B cell (primary cell): ENCODE measurements at regions of chr2 and their contacts with region 1.

Region 1: DNA sequence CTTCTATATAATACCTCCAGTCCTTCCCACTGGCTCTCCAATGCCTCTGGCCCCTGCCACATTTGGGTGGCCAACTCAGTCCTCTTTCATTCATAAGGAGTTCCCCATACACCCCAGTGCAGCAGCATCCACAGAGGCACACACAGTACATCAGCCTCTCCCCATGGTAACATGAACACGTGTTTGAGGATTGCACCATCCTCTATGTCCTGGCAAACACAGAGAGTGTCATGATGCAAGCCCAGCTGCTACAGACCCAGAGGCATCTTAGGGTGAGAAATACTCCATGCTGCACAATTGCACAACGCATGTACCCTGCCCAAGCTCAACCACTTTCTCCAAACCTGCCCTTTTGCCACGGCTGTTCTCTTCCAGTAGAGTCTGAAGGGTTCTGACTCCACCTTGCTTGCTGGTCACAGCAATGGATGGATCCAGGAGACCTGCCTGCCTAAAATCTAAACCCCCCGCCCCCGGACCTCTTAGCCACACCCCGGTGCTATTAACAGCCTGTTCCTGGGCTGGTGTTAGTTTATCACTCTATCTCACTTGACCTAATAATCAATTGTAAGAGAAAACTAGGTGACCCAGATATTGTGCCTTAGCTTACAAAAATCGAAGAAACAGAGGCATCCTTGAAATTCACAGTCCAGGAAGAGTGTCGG is 11.4 kb downstream of the IGFBP5 start:
- DNase-seq: no peak
- ATAC-seq: no peak
- H3K4me3 ChIP-seq: no peak overlapping the region
- H3K4me3 Mint-ChIP-seq: no peak overlapping the region
- H3K27ac ChIP-seq: no peak overlapping the region
- H3K27ac Mint-ChIP-seq: no peak overlapping the region
- H3K4me1 ChIP-seq: no peaks in the 10 kb centered on the region
- H3K4me1 Mint-ChIP-seq: no peaks in the 10 kb centered on the region
- H3K27me3 ChIP-seq: peaks cover 0 to 27% (median 6%) of the 10 kb centered on the region in 4 experiments
- H3K27me3 Mint-ChIP-seq: peaks cover 64% of the 10 kb centered on the region
- CTCF ChIP-seq: no peak

Region 2: DNA sequence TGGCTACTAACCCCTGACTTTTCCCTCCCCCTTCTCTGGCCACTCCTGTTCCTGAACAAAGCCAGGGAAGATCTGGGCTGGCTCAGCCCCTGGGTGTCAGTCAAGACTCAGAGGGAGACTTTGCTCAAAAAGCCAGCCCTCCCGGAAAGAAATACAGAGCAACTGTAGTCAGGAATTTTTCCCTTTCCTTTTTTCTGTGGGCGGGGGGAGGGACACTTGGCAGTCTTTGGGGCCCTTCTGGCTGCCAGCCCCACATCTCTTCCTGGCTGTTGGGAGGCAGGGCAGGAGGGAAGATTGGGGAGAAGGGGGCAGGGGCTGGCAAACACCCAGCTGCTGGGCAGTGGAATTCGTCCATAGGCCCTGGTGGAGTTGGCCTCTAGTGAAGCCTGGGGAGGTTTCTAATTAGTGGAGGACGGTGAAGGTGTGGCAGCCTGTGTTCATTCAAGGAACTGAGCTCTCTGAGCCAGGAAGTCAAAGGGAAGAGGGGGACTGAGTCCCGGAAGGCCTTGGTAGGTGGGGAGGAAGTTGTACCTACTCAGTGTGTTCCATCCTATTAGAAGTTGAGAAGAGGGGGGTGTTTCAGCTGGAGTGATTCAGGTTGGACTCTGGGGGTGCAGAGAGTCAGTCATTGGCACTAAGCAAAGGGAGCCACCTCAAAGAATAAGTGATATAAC is 39.9 kb before region 1 on chr2:
- CTCF ChIA-PET with region 1: no interaction called
- POLR2A ChIA-PET with region 1: no interaction called
- intact Hi-C with region 1: no loop called
- DNase-seq: no peak
- ATAC-seq: no peak
- H3K4me3 ChIP-seq: no peak overlapping the region
- H3K4me3 Mint-ChIP-seq: no peak overlapping the region
- H3K27ac ChIP-seq: no peak overlapping the region
- H3K27ac Mint-ChIP-seq: no peak overlapping the region
- H3K4me1 ChIP-seq: peaks cover 0 to 3% of the 10 kb centered on the region in 2 donors
- H3K4me1 Mint-ChIP-seq: peaks cover 5% of the 10 kb centered on the region
- H3K27me3 ChIP-seq: peaks cover 0 to 3% (median under 1%) of the 10 kb centered on the region in 4 experiments
- H3K27me3 Mint-ChIP-seq: peaks cover 24% of the 10 kb centered on the region
- CTCF ChIP-seq: no peak

Region 3: GRCh38 chr2:217510771-217511291 is 826.9 kb after region 1 on chr2:
- CTCF ChIA-PET with region 1: interaction called, 12 read pairs
- POLR2A ChIA-PET with region 1: no interaction called
- intact Hi-C with region 1: no loop called
- DNase-seq: peak; percentile 26
- ATAC-seq: no peak
- H3K4me3 ChIP-seq: no peak overlapping the region
- H3K4me3 Mint-ChIP-seq: no peak overlapping the region
- H3K27ac ChIP-seq: no peak overlapping the region
- H3K27ac Mint-ChIP-seq: no peak overlapping the region
- H3K4me1 ChIP-seq: no peaks in the 10 kb centered on the region
- H3K4me1 Mint-ChIP-seq: no peaks in the 10 kb centered on the region
- H3K27me3 ChIP-seq: peaks cover 0 to 8% (median 4%) of the 10 kb centered on the region in 4 experiments
- H3K27me3 Mint-ChIP-seq: peaks cover 25% of the 10 kb centered on the region
- CTCF ChIP-seq: peak; percentile 44

Region 4: DNA sequence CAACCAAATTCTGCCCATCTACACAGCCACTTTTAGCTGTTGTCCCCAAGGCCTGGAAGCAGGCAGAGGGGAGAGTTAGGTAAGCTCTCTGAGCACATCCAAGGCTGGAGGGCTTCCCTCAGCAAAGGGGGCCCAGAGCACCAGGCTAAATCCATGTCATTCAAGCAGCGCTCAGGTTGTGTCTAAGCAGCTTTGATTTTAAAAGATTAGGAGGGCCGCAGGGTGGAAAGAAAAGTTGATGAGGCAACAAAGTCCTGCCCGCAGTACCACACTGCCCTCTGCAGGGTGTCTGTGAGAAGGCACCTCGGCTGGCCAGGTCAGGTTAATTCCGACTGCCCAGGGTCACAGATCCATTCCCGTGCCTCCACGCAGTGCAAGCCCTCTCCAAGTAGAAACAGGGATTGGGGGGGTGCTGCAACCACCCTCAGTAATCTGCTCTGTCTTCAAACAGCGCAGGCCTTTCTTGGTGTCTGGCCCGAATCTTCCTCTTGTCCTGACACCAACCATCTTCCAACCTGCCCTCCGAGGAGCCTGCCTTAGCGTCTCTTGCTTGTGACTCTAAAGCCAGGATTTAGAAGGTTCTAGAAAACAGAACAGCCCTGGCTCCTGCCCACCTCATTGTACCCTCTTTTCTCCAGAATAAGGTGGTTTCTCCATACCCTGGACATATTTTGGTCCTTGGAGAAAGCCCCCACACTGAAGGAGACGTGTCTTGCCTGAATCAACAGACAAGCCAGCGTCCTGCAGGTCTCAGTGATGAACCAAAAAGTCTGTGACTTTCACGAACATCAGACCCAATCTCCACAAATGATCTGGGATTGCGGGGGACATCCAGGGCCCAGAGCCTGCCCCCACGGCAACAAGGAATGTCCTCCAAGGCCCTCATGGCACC is 1029.7 kb after region 1 on chr2:
- CTCF ChIA-PET with region 1: interaction called, 21 read pairs
- POLR2A ChIA-PET with region 1: no interaction called
- intact Hi-C with region 1: no loop called
- DNase-seq: peak; percentile 53
- ATAC-seq: peak; percentile 56
- H3K4me3 ChIP-seq: no peak overlapping the region
- H3K4me3 Mint-ChIP-seq: no peak overlapping the region
- H3K27ac ChIP-seq: no peak overlapping the region
- H3K27ac Mint-ChIP-seq: no peak overlapping the region
- H3K4me1 ChIP-seq: no peaks in the 10 kb centered on the region
- H3K4me1 Mint-ChIP-seq: no peaks in the 10 kb centered on the region
- H3K27me3 ChIP-seq: peaks cover 0 to 16% (median 7%) of the 10 kb centered on the region in 4 experiments
- H3K27me3 Mint-ChIP-seq: peaks cover 38% of the 10 kb centered on the region
- CTCF ChIP-seq: peak; percentile 88